Aorta (tissue), 5 donors: ENCODE measurements at regions of chr17 and their contacts with region 1.

Region 1: GRCh38 chr17:35731239-35731931 is at the start of gene RASL10B:
- DNase-seq: peak; percentile 65 to 87
- ATAC-seq: peak; percentile 65
- H3K4me3 ChIP-seq: peak within 1 kb of the TSS; percentile 81 to 92
- H3K27ac ChIP-seq: no peak within 1 kb of the TSS
- H3K4me1 ChIP-seq: no peaks in the 10 kb centered on the region
- H3K27me3 ChIP-seq: no peaks in the 10 kb centered on the region
- total RNA-seq, gene RASL10B: 1.3 to 3.5 TPM

Region 2: GRCh38 chr17:35674552-35674951 is 56.8 kb before region 1 on chr17:
- intact Hi-C with region 1: loop called in 1 of 2 experiments (anchors 5 kb)
- DNase-seq: no peak
- ATAC-seq: no peak
- H3K4me3 ChIP-seq: no peak overlapping the region
- H3K27ac ChIP-seq: no peak overlapping the region
- H3K4me1 ChIP-seq: no peaks in the 10 kb centered on the region
- H3K27me3 ChIP-seq: no peaks in the 10 kb centered on the region